ENCODE measurements at regions of chr12 and their contacts with region 1.

Region 1: DNA sequence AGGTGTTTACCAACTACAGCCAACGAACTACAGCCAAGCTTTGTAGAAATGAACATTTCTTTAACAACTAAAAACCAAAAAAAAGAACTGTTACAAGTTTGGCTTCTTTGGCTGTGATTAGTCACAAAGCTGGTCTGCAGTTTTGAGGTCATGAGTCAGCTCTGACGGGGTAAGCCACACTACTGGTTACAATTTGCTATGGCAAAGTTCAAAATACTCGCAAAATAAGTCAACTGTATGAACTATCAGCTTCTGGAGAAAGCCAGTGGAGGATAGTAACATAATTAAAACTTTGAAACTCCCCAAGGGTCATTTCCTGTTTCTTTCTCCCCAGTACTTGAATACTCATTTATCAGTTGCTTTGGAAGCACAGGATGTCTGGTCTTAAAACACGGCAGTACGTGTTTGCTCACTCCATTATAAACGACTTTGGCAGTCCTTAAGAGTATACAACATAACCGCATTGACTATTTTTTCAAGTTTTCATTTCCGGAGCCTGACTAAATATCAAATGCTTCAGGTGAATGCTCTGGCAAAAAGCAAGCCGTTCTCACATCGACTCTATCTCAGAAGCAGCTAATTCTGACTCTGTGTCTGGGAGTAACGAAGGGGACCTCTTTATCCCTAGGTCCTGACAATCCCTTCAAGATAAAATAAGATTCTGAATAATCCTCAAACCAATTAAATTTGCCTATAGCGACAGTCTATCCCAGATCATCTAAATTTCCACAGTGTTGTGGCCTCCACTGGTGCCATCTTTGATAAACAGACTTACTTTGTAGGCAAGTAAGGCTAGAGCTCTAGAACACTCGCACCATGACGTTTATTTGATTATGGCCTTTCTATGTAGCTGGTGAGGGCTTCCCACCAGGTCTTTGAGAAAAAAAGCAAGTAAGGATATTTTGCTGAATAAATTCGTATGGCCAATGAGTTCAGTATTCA is 10.6 kb downstream of the PHLDA1 start:
- DNase-seq: peak; percentile 88
- ATAC-seq: peak; percentile 79
- H3K4me3 Mint-ChIP-seq: peak overlapping the region; percentile 54
- H3K27ac Mint-ChIP-seq: peak overlapping the region; percentile 99
- H3K4me1 Mint-ChIP-seq: peaks cover 56% of the 10 kb centered on the region
- H3K27me3 Mint-ChIP-seq: peaks cover 1% of the 10 kb centered on the region

Region 2: DNA sequence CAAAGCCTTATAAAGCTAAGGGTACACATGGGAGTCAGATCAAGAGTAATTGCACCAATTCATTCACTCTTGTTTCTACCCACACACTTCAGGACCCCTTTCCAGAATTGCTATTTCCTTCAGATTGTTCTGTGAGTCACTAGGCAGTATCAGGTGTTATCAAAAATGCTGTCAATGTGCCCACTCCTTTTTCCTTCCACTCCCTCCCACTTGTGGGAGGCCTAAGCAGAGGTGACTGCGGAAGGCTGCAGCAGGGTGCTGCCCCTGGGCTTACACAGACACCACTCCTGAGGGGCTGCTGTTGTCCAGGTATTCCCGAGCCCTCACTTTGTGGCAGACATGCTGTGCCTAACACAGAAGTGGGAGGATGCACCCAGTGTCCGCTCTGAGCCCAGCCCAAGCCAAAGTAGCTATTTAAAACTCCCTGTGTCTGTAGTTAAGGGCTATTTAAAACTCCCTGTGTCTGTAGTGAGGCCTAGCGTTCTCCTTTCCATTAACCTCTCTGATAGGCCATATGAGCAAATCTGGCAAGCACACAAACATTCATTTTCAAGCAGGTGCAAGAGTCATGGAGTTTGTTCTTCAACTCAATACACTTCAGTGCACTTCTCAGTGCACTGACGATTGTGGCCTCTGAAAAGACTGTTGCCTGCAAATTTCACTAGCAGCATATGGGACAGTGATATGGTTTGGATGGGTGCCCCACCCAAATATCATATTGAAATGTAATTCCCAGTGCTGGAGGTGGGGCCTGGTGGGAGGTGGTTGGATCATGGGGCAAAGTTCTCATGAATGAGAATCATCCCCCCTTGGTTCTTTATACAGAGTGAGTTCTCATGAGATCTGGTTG is 107.3 kb before region 1 on chr12:
- CTCF ChIA-PET with region 1: no interaction called
- POLR2A ChIA-PET with region 1: interaction called, 6 read pairs
- intact Hi-C with region 1: loop called (anchors 1 kb)
- DNase-seq: peak; percentile 74
- ATAC-seq: peak; percentile 94
- H3K4me3 Mint-ChIP-seq: no peak overlapping the region
- H3K27ac Mint-ChIP-seq: no peak overlapping the region
- H3K4me1 Mint-ChIP-seq: peaks cover 21% of the 10 kb centered on the region
- H3K27me3 Mint-ChIP-seq: peaks cover 1% of the 10 kb centered on the region

Region 3: DNA sequence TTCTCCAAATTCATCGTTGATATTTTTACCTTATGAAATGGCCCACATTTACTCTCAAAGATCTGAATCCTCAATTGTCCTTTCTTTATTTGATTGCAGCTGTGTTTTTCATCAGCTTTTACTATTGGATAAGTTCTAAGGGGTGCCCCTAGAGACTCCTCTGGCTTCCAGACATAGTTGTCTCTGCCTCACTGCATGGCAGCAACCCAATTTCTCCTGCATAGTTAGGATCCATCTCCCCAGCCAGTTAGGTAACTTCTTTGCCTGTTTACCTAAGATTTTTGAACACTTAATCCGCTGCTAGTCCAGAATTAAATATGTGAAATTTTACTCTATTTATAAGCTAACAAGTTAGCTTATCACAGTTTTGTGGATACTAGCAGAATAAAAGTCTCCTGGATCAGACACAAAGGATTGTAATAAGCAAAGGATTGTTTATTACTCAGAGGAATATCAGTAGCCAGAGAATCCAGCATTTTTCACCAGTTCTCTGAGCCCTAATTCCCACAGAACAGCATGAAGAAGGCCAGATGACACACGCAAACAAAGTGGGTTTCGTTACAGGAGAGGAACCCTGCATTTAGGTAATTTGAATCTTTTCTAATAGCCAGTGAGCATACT is 226.1 kb after region 1 on chr12:
- CTCF ChIA-PET with region 1: no interaction called
- POLR2A ChIA-PET with region 1: no interaction called
- intact Hi-C with region 1: no loop called
- DNase-seq: no peak
- ATAC-seq: no peak
- H3K4me3 Mint-ChIP-seq: no peak overlapping the region
- H3K27ac Mint-ChIP-seq: no peak overlapping the region
- H3K4me1 Mint-ChIP-seq: no peaks in the 10 kb centered on the region
- H3K27me3 Mint-ChIP-seq: peaks cover 6% of the 10 kb centered on the region